ENCODE measurements at regions of chr3 and their contacts with region 1.

Region 1: GRCh38 chr3:196502775-196503195 is 783 bp downstream of the RNF168 start:
- DNase-seq: peak; percentile 90
- H3K4me3 Mint-ChIP-seq: peak overlapping the region; percentile 98
- H3K27ac Mint-ChIP-seq: peak overlapping the region; percentile 97
- H3K4me1 Mint-ChIP-seq: peaks cover 35% of the 10 kb centered on the region
- H3K27me3 Mint-ChIP-seq: peaks cover 2% of the 10 kb centered on the region

Region 2: DNA sequence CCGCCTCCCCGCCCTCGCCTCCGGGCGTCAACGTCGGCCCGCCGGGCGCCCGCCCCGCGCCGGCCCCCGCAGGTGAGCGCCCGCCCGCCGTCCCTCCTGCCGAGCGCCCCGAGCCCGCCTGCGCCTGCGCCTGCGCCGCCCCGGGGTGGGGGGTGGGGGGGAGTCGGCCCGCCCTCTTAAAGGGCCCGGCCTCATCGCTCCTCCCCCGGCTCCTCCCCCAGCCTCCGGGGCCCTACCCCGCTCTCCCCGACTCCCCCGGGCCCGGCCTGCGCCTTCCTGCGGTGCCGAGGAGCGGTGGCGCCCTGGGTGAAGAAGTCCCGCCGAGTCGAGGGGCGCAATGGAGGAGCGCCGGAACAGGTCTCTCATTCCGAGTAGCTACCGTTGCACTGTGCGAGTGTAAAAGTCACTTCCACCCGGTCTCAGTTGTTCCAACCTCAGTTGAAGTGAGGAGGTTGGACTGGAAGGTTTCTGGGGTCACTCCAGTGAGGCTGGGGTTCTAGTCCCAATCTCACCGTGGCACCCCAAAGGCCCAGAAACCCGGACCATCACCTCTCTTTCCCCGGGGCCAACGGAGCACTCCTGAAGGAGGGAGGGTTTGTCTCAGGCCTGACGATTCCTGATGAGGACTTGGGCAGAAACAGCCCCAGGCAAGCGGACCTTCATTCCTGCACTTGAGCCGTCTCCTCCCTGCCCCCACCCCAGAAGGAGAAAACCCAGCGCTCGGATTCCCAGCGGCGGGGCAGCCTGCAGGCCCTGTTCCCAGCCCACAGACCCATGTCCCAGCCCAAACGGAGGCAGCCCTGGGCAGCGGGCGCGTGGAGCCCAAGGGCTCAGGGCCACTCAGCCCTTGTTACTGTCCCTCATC is 592.9 kb before region 1 on chr3:
- intact Hi-C with region 1: loop called (anchors 5 kb)
- DNase-seq: peak; percentile 96
- H3K4me3 Mint-ChIP-seq: peak overlapping the region; percentile 66
- H3K27ac Mint-ChIP-seq: peak overlapping the region; percentile 84
- H3K4me1 Mint-ChIP-seq: peaks cover 36% of the 10 kb centered on the region
- H3K27me3 Mint-ChIP-seq: no peaks in the 10 kb centered on the region

Region 3: DNA sequence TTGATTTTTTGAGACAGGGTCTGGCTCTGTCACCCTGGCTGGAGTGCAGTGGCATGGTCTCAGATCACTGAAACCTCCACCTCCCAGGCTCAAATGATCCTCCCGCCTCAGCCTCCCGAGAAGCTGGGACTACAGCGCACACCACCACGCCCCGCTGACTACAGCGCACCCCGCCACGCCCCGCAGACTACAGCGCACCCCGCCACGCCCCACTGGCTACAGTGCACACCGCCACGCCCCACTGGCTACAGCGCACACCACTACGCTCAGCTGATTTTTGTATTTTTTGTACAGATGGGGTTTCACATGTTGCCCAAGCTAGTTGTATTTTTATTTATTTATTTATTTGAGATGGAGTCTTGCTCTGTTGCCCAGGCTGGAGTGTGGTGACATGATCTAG is 250.9 kb before region 1 on chr3:
- intact Hi-C with region 1: loop called (anchors 1 kb)
- DNase-seq: no peak
- H3K4me3 Mint-ChIP-seq: no peak overlapping the region
- H3K27ac Mint-ChIP-seq: no peak overlapping the region
- H3K4me1 Mint-ChIP-seq: peaks cover 4% of the 10 kb centered on the region
- H3K27me3 Mint-ChIP-seq: no peaks in the 10 kb centered on the region

Region 4: GRCh38 chr3:196412704-196413103 is 90.1 kb before region 1 on chr3:
- intact Hi-C with region 1: loop called (anchors 5 kb)
- DNase-seq: no peak
- H3K4me3 Mint-ChIP-seq: no peak overlapping the region
- H3K27ac Mint-ChIP-seq: peak overlapping the region; percentile 1
- H3K4me1 Mint-ChIP-seq: peaks cover 26% of the 10 kb centered on the region
- H3K27me3 Mint-ChIP-seq: no peaks in the 10 kb centered on the region

Region 5: DNA sequence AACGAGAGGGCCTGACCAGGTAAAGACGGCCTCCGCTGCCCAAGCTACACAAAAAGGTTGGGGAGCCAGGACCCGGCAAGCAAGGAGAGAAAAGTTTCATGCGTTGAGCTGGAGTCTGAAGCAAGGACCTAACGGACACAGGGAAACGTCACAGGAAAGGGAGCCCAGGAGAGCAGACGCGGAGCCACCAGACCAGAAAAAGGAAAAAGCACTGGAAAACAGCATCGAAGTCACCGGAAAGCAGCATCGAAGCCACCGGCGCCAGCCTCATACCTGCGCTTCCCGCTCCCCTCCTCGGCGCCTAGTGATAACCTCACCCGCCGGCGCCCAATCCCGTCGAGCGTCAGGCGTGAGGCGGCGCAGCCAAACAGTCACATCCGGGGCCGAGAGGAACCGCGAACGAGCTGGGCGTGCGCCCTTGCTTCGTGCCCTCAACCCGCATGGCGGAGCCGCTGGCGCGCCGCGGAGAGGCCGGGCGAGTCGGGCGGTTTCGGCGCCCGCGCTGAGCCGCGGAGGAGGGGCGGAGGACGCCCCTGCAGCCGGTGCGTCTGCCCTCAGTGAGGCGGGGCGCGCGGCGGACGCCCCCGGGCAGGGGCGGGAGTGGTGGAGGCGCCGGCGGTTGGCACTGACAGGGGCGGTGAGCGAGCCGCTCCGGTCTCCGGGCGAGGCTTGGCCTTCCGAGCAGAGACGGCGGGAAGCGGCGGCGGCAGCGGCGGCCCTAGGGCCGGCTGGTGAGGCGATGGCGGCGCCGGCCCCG is 65.6 kb after region 1 on chr3 and contains the starts of genes FBXO45 and WDR53:
- intact Hi-C with region 1: loop called (anchors 1 kb)
- DNase-seq: peak; percentile 99
- H3K4me3 Mint-ChIP-seq: peak within 1 kb of the TSS; percentile 95
- H3K27ac Mint-ChIP-seq: peak within 1 kb of the TSS; percentile 97
- H3K4me1 Mint-ChIP-seq: peaks cover 37% of the 10 kb centered on the region
- H3K27me3 Mint-ChIP-seq: no peaks in the 10 kb centered on the region
- total RNA-seq, gene FBXO45: 25.5 and 25.9 TPM in 2 replicates
- total RNA-seq, gene WDR53: 18.4 and 24.5 TPM in 2 replicates

Region 6: GRCh38 chr3:196639483-196640296 is 136.9 kb after region 1 on chr3 and contains the start of gene NRROS:
- intact Hi-C with region 1: no loop called
- DNase-seq: peak; percentile 89
- H3K4me3 Mint-ChIP-seq: peak within 1 kb of the TSS; percentile 86
- H3K27ac Mint-ChIP-seq: peak within 1 kb of the TSS; percentile 94
- H3K4me1 Mint-ChIP-seq: peaks cover 53% of the 10 kb centered on the region
- H3K27me3 Mint-ChIP-seq: no peaks in the 10 kb centered on the region
- total RNA-seq, gene NRROS: 38.2 and 39.0 TPM in 2 replicates

Region 7: GRCh38 chr3:196711838-196712513 is 209.2 kb after region 1 on chr3 and contains the starts of genes CEP19 and PIGX:
- intact Hi-C with region 1: loop called (anchors 1 kb)
- DNase-seq: peak; percentile 97
- H3K4me3 Mint-ChIP-seq: peak within 1 kb of the TSS; percentile 88
- H3K27ac Mint-ChIP-seq: peak within 1 kb of the TSS; percentile 97
- H3K4me1 Mint-ChIP-seq: peaks cover 32% of the 10 kb centered on the region
- H3K27me3 Mint-ChIP-seq: no peaks in the 10 kb centered on the region
- total RNA-seq, gene CEP19: 3.9 and 4.0 TPM in 2 replicates
- total RNA-seq, gene PIGX: 54.3 and 54.5 TPM in 2 replicates

Region 8: DNA sequence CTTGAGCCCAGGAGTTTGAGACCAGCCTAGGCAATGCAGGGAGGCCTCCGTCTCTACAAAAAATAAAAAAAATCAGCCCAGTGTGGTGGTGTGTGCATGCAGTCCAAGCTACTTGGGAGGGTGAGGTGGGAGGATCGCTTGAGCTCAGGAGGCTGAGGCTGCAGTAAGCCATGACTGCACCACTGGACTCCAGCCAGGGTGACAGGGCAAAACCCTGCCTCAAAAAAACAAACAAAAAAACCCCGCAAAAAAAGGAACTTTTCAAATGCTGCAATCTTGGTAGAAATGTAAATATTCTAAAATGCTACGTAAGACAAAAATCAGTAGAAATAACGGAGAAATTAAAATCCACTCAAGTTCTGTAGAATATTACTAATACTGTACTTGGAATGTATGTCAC is 635.0 kb after region 1 on chr3:
- intact Hi-C with region 1: no loop called
- DNase-seq: no peak
- H3K4me3 Mint-ChIP-seq: no peak overlapping the region
- H3K27ac Mint-ChIP-seq: no peak overlapping the region
- H3K4me1 Mint-ChIP-seq: peaks cover 4% of the 10 kb centered on the region
- H3K27me3 Mint-ChIP-seq: no peaks in the 10 kb centered on the region

Measured in activated CD4-positive, alpha-beta T cell treated with anti-CD3 and anti-CD28 coated beads, Interleukin-2, amount 10 ng/mL, durations not matched to agents 24 days and 14 days (primary cell).